MCF 10A (cell line): ENCODE measurements at regions of chr2 and their contacts with region 1.

Region 1: DNA sequence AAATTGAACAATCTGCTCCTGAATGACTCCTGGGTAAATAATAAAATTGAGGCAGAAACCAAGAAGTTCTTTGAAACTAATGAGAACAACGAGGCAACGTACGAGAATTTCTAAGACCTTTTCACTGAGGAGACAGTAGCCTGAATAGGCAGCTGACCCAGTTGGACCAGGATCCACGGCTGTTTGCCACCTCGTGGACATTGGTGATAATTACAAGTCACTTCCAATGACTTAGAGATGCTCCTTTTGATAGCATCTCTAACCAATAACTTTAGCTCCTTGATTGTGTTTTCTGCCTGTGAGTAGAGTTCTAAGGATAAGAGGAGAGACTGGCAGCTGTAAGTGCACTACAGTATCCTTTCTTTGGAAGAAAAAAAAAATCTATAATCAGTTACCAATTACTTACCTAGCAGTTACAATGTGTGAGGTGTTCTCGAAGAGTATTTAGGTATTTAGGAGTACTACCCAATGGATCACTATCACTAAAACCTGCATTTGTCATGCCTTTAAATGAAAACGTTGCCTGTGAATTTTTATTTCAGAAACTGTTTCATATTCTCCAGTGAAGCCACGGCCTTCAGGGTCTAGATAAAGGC is 31.3 kb upstream of the CNTNAP5 start:
- DNase-seq: peak; percentile 67
- H3K4me3 Mint-ChIP-seq: peak overlapping the region; percentile 10
- H3K27ac Mint-ChIP-seq: no peak overlapping the region
- H3K4me1 Mint-ChIP-seq: peaks cover 20% of the 10 kb centered on the region
- H3K27me3 Mint-ChIP-seq: no peaks in the 10 kb centered on the region
- CTCF ChIP-seq: peak; percentile 57

Region 2: DNA sequence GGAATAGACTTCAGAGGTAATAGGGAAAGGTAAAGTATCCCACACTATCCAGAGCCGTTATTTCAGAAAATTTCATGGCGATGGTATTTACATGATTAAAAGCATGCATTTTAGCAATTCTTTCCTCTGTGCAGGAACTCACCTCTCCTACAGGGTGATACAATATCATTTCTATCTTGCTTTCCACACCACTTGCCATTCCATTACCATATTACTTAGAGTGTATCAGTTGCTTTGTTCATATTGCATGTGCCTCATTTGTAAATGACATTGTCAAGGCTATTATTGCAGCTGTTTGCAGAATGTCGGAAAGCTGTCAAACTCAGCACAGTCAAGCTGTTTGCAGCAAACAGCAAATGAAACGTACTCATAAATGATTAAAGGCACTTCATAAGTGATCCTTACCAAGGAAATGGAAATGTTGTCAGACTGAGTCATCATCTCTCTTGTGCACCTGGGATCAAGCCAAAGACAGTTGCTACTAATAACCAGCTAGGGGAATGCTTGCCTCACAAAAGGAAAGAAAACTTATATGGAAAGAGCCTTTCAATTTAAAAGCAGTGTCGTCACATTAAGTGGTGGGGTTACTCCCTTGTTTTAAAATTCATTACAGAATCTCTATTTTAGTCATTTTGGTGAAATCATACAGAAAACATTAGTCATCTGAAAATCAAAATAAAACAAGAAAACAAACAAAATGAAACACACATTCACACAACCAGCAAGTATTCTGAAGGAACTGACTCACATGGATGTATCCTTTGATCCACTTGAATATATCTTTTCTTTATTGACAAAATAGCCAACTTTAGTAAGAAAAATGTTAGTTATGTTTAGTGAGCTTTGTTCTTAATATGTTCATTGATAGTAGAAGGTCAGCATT is 1032.8 kb before region 1 on chr2:
- CTCF ChIA-PET with region 1: interaction called, 5 read pairs
- POLR2A ChIA-PET with region 1: interaction called, 6 read pairs
- intact Hi-C with region 1: loop called (anchors 1 kb)
- DNase-seq: peak; percentile 94
- H3K4me3 Mint-ChIP-seq: peak overlapping the region; percentile 44
- H3K27ac Mint-ChIP-seq: peak overlapping the region; percentile 59
- H3K4me1 Mint-ChIP-seq: peaks cover 18% of the 10 kb centered on the region
- H3K27me3 Mint-ChIP-seq: no peaks in the 10 kb centered on the region
- CTCF ChIP-seq: peak; percentile 29

Region 3: DNA sequence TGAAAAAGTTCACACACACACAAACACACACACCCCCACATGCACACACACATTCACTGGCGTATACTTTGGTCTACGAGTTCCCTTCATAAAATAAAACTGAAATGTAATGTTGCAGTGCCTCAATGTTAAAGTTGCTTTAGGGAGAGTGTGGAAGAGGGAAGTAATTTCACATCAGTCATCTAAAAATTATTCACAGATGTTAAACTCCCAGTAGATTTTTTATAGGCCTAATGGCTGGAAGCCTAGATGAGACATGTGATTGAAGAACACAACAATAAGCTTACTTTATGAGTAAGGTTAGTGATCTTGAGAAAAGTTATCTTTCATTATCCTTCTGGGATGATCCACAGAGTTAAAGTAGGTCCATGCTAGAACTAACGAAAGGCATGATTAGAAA is 475.5 kb before region 1 on chr2:
- CTCF ChIA-PET with region 1: no interaction called
- POLR2A ChIA-PET with region 1: no interaction called
- intact Hi-C with region 1: loop called (anchors 2 kb)
- DNase-seq: peak; percentile 38
- H3K4me3 Mint-ChIP-seq: no peak overlapping the region
- H3K27ac Mint-ChIP-seq: peak overlapping the region; percentile 61
- H3K4me1 Mint-ChIP-seq: peaks cover 13% of the 10 kb centered on the region
- H3K27me3 Mint-ChIP-seq: no peaks in the 10 kb centered on the region
- CTCF ChIP-seq: no peak